Activated CD8-positive, alpha-beta memory T cell treated with anti-CD3 and anti-CD28 coated beads, Interleukin-2, amount 10 ng/mL, durations not matched to agents 7 days and 5 days (primary cell): ENCODE measurements at regions of chr19 and their contacts with region 1.

Region 1: GRCh38 chr19:51393959-51394836 is 3.8 kb upstream of the C19orf84 start:
- DNase-seq: peak; percentile 99
- ATAC-seq: peak; percentile 86
- H3K4me3 Mint-ChIP-seq: peak overlapping the region; percentile 94
- H3K27ac Mint-ChIP-seq: peak overlapping the region; percentile 100
- H3K4me1 Mint-ChIP-seq: peaks cover 47% of the 10 kb centered on the region
- H3K27me3 Mint-ChIP-seq: no peaks in the 10 kb centered on the region

Region 2: DNA sequence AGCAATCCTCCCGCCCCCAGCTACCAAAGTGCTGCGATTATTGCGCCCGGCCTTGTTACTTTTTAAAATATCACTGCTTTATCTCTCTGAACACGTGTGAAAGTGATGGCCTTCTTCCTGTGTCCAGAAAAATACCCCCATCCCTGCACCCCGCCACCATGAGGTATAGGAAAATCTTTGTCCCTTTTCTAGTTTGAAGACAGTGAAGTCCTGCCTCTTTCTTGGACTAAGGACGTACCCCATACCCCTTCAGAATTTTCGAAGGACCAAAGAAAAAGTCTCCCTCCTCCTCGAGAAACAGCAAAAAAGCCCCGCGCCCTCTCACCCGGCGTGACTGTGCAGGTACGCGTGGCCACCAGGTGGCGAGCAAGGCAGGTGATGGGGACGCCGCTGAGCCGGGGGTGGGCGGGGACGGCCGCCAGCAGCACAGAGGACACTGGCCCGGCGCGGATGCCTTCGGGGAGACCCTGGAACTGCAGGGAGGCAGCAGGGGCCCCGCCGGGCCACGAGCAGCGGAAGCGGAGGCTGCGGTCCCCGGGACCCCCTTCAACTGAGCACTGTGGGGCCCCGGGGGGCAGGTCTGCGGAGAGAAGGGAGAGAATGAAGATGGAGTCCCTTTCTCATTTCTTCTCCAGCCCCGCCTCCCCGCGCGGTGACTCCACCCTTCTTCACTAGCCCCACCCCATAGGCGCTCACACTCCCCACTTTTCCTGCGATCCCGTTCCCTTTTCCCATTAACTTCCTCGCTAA is 55.5 kb before region 1 on chr19:
- CTCF ChIA-PET with region 1: interaction called, 13 read pairs
- DNase-seq: peak; percentile 93
- ATAC-seq: peak; percentile 80
- H3K4me3 Mint-ChIP-seq: peak overlapping the region; percentile 84
- H3K27ac Mint-ChIP-seq: peak overlapping the region; percentile 84
- H3K4me1 Mint-ChIP-seq: peaks cover 13% of the 10 kb centered on the region
- H3K27me3 Mint-ChIP-seq: peaks cover 12% of the 10 kb centered on the region

Region 3: DNA sequence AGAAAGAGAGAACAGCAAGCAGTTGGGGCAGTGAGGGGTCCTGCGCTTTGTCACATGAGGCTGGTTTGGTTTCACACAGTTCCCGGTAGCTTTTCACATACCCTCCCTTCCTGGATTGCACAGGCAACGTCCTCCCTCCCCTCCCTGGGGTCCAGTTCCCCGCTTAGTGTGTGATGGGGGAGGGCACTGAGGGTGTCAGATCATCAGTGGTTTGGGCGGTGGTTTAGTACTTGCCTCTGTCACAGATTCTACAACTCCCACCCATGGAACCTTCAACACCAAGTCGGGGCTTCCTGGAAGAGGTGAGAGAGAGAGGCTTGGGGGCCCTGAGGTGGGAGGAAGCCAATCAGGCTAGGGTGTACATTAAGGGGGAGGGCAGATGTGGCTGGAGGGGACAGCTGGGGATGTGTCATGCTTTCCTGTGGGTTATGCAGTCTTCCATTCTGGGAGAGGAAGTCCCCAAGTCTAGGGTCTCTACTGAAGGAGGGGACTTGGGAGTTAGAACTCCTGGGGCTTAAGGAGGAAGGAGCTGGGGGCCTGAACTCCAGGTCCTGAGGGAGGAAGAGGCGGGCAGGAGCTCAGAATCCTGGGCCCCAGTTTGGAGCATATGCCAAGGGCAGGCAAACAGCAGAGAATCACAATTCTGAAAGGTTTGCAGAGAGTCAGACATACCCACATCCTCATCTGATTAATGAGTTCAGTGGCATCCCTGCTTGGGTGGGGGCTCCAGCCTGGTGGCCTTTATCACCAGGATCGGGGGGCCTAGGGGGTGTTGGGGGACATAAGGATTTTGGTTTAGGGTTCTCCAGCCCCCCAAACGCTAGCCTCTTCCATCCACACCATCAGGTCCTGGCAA is 21.3 kb before region 1 on chr19 and contains the start of gene NKG7:
- CTCF ChIA-PET with region 1: interaction called, 97 read pairs
- DNase-seq: peak; percentile 98
- ATAC-seq: peak; percentile 71
- H3K4me3 Mint-ChIP-seq: peak within 1 kb of the TSS; percentile 97
- H3K27ac Mint-ChIP-seq: peak within 1 kb of the TSS; percentile 98
- H3K4me1 Mint-ChIP-seq: peaks cover 54% of the 10 kb centered on the region
- H3K27me3 Mint-ChIP-seq: no peaks in the 10 kb centered on the region
- total RNA-seq, gene NKG7: 852 to 1,014 TPM

Region 4: DNA sequence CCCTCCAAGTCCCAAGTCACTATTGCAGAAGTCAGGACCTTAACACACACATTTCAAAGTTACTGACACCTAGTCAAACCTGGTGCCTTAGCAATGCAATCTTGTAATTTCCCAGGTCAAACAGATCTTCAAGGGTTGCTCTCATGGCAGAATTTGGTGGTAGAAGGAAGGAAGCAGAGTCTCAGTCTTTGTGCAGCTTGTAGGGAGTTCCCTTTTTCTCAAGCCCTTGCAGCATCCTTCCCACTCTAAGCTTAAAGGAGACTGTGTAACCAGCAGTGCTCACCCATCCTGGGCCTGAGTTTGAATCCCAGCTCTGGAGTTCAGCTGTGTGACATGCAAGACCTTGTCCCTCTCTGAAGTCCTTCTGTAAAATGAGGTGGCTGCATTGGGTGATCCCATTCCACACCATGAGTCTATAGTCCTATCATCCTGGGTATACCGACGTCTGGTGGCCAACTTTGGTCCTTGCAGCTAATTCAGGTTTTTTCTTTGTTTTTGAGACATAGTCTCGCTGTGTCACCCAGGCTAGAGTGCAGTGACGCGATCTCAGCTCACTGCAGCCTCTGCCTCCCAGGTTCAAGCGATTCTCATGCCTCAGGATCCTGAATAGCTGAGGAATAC is 13.4 kb after region 1 on chr19:
- CTCF ChIA-PET with region 1: interaction called, 28 read pairs
- DNase-seq: peak; percentile 62
- ATAC-seq: peak; percentile 60
- H3K4me3 Mint-ChIP-seq: no peak overlapping the region
- H3K27ac Mint-ChIP-seq: no peak overlapping the region
- H3K4me1 Mint-ChIP-seq: peaks cover 10% of the 10 kb centered on the region
- H3K27me3 Mint-ChIP-seq: no peaks in the 10 kb centered on the region

Region 5: GRCh38 chr19:51441410-51442390 is 47.5 kb after region 1 on chr19:
- CTCF ChIA-PET with region 1: interaction called, 64 read pairs
- DNase-seq: peak; percentile 99
- ATAC-seq: peak; percentile 91
- H3K4me3 Mint-ChIP-seq: peak overlapping the region; percentile 68
- H3K27ac Mint-ChIP-seq: peak overlapping the region; percentile 82
- H3K4me1 Mint-ChIP-seq: peaks cover 39% of the 10 kb centered on the region
- H3K27me3 Mint-ChIP-seq: peaks cover 31% of the 10 kb centered on the region